Dendritic cell treated with granulocyte-macrophage colony-stimulating factor and Interleukin-4, amounts not matched to agents 40 ng/mL and 50 ng/mL, for 4 days (primary cell): ENCODE measurements at regions of chr1 and their contacts with region 1.

Region 1: DNA sequence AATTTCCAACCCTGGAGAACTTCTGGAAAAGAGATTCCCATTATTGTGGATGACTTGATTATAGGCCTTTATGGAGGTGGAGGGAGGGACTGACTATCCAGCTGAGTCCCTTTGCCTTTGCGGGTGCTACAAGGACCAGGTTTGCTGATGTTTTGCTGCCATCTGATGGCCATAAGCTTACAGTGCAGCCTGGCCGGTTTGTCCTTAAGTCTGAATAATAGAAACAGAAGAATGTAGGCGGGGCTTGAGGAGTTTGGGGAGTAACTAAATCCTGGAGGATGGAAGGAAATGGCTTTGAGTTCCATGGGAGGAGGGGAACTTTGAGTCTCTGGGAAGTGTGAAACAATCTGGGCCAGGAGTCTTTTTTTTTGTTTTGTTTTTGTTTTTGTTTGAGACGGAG is 55.7 kb upstream of the CD1D start:
- H3K4me3 Mint-ChIP-seq: no peak overlapping the region
- H3K27ac Mint-ChIP-seq: no peak overlapping the region
- H3K4me1 Mint-ChIP-seq: peaks cover 4% of the 10 kb centered on the region
- H3K27me3 Mint-ChIP-seq: peaks cover 37% of the 10 kb centered on the region

Region 2: DNA sequence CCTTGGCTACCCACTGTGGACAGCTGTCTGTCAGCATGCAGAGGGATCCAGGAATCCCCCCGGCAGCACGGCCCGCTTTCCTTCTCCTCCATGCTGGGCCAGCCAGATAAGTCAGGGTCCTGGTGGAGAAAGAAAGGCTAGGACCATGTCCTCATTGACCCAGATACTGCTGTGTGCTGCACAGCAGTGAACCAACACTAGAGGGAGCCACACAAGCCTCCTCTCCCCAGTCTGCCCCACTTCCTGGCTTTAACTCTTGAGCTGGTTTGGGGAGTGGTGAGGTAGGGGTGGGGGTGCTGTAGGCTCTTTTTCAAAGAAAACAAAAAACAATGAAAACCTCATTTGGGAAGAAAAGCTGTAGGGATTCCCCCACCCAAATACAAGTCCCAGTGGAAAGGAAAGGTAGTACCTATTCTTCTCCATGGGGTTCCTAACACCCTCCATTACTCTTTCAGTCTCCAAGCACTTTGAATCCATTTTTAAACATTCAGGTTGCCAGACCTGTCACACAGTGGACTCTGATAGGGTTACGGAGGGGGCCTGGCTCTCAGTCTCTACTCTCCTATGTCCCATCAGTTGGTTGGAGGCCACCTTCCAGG is 29.2 kb before region 1 on chr1:
- intact Hi-C with region 1: loop called (anchors 2 kb)
- H3K4me3 Mint-ChIP-seq: no peak overlapping the region
- H3K27ac Mint-ChIP-seq: no peak overlapping the region
- H3K4me1 Mint-ChIP-seq: no peaks in the 10 kb centered on the region
- H3K27me3 Mint-ChIP-seq: peaks cover 6% of the 10 kb centered on the region